Activated T-helper 1 cell treated with anti-CD3 and anti-CD28 coated beads, Interleukin-12 subunit alpha, Interleukin-12 subunit beta, Interleukin-2, Interleukin-4 antibody, amounts not matched to agents 30 ng/mL and 10 ng/mL and 1 ng/mL, durations not matched to agents 14 hours and 24 hours and 36 hours (primary cell): ENCODE measurements at regions of chr14 and their contacts with region 1.

Region 1: GRCh38 chr14:73491256-73492042 is 716 bp downstream of the RIOX1 start:
- DNase-seq: peak; percentile 75
- H3K4me3 Mint-ChIP-seq: peak overlapping the region; percentile 86
- H3K27ac Mint-ChIP-seq: peak overlapping the region; percentile 86
- H3K4me1 Mint-ChIP-seq: peaks cover 52% of the 10 kb centered on the region
- H3K27me3 Mint-ChIP-seq: peaks cover 5% of the 10 kb centered on the region

Region 2: GRCh38 chr14:73069585-73069984 is 421.9 kb before region 1 on chr14:
- intact Hi-C with region 1: no loop called
- DNase-seq: no peak
- H3K4me3 Mint-ChIP-seq: no peak overlapping the region
- H3K27ac Mint-ChIP-seq: no peak overlapping the region
- H3K4me1 Mint-ChIP-seq: no peaks in the 10 kb centered on the region
- H3K27me3 Mint-ChIP-seq: no peaks in the 10 kb centered on the region

Region 3: GRCh38 chr14:73136387-73137225 is 354.8 kb before region 1 on chr14 and contains the start of gene PSEN1:
- intact Hi-C with region 1: loop called (anchors 1 kb)
- DNase-seq: peak; percentile 98
- H3K4me3 Mint-ChIP-seq: peak within 1 kb of the TSS; percentile 86
- H3K27ac Mint-ChIP-seq: peak within 1 kb of the TSS; percentile 100
- H3K4me1 Mint-ChIP-seq: peaks cover 19% of the 10 kb centered on the region
- H3K27me3 Mint-ChIP-seq: no peaks in the 10 kb centered on the region
- total RNA-seq, gene PSEN1: 41.1 and 41.9 TPM in 2 replicates

Region 4: GRCh38 chr14:73344319-73344718 is 147.1 kb before region 1 on chr14:
- intact Hi-C with region 1: no loop called
- DNase-seq: no peak
- H3K4me3 Mint-ChIP-seq: no peak overlapping the region
- H3K27ac Mint-ChIP-seq: no peak overlapping the region
- H3K4me1 Mint-ChIP-seq: no peaks in the 10 kb centered on the region
- H3K27me3 Mint-ChIP-seq: no peaks in the 10 kb centered on the region

Region 5: DNA sequence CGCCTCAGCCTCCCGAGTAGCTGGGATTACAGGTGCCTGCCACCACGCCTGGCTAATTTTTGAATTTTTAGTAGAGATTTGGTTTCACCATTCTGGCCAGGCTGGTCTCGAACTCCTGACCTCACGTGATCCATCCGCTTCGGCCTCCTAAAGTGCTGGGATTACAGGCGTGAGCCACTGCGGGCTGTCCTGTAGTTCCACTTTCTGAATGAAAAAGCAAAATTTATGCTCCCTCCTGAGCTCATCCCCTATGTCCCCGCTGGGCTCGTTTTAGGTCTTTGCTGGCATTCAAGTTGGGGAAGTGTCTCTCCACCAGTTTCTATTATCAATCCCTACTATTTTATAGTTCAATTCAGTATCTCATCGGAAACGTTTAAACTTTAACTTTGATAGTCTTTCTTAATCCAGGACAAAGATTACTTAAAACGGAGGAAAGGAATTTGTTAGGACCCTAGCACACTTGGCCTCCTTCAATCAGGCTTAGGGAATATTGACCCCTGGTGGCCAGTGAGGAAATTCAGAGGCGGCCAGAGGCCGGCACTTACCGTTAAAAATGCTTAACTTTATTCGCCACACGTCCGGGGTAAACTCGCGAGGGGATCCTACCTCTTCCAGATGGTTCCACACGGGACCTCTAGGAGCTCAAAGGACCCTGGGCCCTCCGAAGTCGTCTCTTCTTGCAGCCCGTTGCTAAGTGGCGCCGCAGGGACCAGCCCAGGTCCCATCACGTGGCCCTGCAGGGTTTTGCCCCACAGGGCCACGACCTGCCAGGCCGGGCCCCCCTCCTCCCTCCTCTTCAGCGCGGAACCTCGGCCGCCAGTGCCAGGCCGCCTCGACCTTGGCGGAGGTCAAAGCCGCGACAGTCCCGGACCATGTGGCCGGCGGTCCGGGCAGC is 141.9 kb after region 1 on chr14:
- intact Hi-C with region 1: loop called (anchors 1 kb)
- DNase-seq: peak; percentile 40
- H3K4me3 Mint-ChIP-seq: peak overlapping the region; percentile 53
- H3K27ac Mint-ChIP-seq: no peak overlapping the region
- H3K4me1 Mint-ChIP-seq: peaks cover 6% of the 10 kb centered on the region
- H3K27me3 Mint-ChIP-seq: peaks cover 41% of the 10 kb centered on the region

Region 6: DNA sequence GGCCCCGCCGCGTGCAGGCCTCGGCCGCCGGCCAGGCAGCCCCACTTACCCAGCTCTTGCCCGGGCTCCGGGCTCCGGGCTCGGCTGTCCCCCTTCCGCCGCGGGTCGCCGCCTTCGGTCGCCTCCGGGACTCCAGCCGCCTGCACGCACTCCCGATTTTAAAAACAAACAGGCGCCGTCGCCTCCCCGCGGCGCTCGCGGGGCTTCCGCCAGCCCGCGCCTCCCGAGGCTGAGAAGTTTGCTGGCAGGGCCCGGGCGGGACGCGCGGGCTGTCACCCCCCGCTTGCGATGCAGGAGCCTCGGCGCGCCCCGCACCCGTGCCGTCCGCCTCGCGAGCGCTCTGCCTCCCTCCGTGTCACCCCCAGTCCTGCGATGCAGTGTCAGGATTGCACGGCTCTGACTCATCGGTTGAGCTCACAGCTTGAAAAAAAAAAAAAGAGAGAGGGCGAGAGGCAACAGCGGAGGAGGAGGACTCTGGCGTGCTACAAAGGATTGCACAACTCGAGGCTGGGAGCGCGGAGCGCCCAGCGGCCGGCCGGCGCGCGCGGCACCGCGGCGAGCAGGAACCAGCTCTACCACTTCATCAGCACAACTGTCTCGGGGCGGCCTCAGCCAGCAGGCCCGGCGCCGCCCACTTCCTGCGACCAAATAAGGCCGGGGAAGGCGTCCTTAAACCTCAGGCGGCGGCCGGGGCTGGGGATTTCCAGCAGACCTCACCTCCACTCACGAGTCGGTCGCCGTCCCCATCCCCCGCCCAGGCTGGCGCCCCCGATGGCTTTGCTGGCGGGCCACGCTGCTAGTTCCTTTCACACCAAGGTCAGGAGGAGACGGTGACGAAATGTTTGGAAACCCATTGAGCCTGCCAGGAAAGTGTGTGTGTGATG is 268.5 kb after region 1 on chr14:
- intact Hi-C with region 1: loop called (anchors 5 kb)
- DNase-seq: peak; percentile 95
- H3K4me3 Mint-ChIP-seq: peak overlapping the region; percentile 85
- H3K27ac Mint-ChIP-seq: peak overlapping the region; percentile 97
- H3K4me1 Mint-ChIP-seq: peaks cover 79% of the 10 kb centered on the region
- H3K27me3 Mint-ChIP-seq: no peaks in the 10 kb centered on the region

Region 7: DNA sequence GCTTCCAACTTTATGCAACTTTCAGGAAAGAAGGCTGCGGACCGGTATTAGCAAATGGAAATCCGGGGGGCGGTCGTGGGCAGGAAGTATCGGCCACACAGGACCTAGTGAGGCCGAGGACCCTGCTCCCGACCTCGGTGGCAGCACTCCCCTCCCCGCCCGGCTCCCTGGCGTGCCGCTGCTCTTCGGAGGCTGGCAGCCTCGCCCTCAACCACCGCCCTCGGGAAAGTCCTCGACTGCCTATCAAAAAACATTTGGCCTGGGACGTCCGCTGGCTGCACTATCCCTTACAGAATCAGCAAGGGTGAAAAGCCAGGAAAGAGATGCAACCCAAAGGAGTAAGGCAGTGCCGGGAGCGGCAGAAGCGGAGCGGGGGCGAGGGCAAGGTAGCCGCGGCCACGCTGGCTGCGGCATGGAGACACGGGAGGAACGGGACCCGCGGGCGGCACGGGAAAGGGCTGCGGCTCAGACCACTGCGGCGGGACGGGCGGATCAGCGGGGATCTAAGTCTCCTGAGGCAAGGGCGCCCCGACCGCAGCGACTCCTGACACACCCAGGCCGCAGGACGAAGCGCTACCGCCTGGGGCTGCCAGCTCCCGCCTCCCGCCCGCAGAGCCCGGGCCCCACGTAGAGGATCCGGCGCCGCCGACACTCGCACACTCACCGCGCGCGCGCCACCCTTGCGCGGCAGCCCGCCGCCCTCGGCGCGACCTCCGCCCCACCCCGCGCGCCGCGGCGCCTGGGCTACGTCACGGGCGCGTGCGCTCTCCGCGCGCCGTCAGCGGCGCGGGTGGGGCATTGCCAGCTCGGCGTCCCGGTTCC is 527.3 kb after region 1 on chr14 and contains the starts of genes BBOF1 and ENTPD5:
- intact Hi-C with region 1: loop called (anchors 1 kb)
- DNase-seq: peak; percentile 85
- H3K4me3 Mint-ChIP-seq: peak within 1 kb of the TSS; percentile 95
- H3K27ac Mint-ChIP-seq: peak within 1 kb of the TSS; percentile 97
- H3K4me1 Mint-ChIP-seq: peaks cover 17% of the 10 kb centered on the region
- H3K27me3 Mint-ChIP-seq: peaks cover 3% of the 10 kb centered on the region
- total RNA-seq, gene BBOF1: 0.51 and 0.88 TPM in 2 replicates
- total RNA-seq, gene ENTPD5: 10.7 and 12.2 TPM in 2 replicates

Region 8: DNA sequence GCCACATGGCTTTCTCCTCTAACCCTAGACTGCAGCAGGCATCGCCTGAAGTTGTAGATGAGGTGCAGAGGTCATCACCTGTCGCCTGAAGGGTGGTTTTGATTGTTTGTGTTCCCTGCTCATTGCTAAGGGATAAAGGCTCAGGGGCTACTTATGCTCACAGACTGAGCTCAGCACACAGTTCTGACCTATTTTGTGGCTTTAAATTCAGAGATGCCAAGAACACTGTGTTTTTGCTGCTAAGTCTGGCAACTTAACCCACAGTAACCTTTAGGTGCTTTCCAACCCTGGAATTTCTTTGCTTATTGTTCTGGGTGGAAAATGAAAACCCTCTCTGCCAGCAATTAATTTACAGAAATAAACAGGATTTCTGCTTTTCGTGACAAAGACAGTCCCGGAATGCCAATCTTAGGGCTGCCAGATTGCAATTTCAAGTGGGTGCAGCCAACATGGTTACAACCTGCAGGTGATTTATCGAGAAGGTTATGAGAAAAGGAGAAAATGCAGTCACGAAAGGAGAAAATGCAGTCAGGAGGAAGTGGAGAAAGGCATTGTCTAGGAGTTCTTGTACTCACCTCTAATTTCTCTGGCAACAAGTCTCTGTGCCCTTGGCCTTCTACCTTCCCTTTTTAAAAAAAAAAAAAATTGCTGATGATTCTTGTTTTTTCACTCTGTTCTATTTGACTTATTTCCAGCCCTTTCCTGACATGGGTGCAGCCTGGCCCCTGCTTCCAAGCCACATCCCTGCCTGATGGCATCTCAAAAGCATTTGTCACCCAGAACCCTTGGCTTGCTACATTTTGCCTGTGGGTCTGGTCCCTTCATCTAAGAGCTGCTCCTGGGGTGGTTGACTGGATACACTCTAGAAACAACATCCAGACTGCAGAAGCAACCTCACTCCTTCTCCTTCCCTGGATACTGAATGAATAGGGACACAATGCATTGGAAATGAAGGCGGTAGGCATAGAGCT is 978.4 kb after region 1 on chr14:
- intact Hi-C with region 1: no loop called
- DNase-seq: no peak
- H3K4me3 Mint-ChIP-seq: no peak overlapping the region
- H3K27ac Mint-ChIP-seq: no peak overlapping the region
- H3K4me1 Mint-ChIP-seq: no peaks in the 10 kb centered on the region
- H3K27me3 Mint-ChIP-seq: peaks cover 7% of the 10 kb centered on the region